HepG2 (cell line): ENCODE measurements at regions of chr17 and their contacts with region 1.

Region 1: GRCh38 chr17:65644545-65644944 is 83.1 kb upstream of the AXIN2 start:
- DNase-seq: no peak
- ATAC-seq: no peak
- H3K4me3 ChIP-seq: no peak overlapping the region
- H3K27ac ChIP-seq: no peak overlapping the region
- H3K4me1 ChIP-seq: no peaks in the 10 kb centered on the region
- H3K27me3 ChIP-seq: no peaks in the 10 kb centered on the region
- CTCF ChIP-seq: no peak
- EP300 ChIP-seq: no peak
- POLR2A ChIP-seq: no peak
- RAD21 ChIP-seq: no peak

Region 2: GRCh38 chr17:64005734-64006167 is 1638.8 kb before region 1 on chr17:
- CTCF ChIA-PET with region 1: no interaction called
- POLR2A ChIA-PET with region 1: no interaction called
- in situ Hi-C with region 1: no loop called
- intact Hi-C with region 1: loop called (anchors 5 kb)
- DNase-seq: peak; percentile 62
- ATAC-seq: peak; percentile 70
- H3K4me3 ChIP-seq: peak overlapping the region in 2 of 3 experiments; percentile 15 to 67; a peak in 3 of 6 replicates
- H3K27ac ChIP-seq: peak overlapping the region; percentile 8
- H3K4me1 ChIP-seq: peaks cover 74% of the 10 kb centered on the region
- H3K27me3 ChIP-seq: no peaks in the 10 kb centered on the region
- CTCF ChIP-seq: peak; percentile 39; the same call in 1 of the 2 replicates
- EP300 ChIP-seq: no peak
- POLR2A ChIP-seq: no peak
- RAD21 ChIP-seq: no peak

Region 3: DNA sequence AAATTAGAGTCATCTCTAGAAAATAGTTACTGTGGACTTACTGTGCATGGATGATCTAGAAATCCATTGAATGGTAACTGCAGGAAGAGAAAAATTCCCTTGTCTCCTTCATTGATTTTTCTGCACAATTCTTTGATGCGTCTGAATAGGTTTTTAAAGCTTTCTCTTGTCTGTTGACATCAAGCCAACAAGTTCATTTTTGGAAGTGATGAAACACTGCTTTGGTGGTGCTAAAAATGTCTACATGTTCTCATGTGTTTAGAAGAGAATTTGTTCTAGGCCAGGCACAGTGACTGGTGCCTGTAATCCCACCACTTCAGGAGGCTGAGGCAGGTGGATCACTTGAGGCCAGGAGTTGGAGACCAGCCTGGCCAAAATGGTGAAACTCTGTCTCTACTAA is 26.0 kb before region 1 on chr17:
- CTCF ChIA-PET with region 1: no interaction called
- POLR2A ChIA-PET with region 1: no interaction called
- in situ Hi-C with region 1: no loop called
- intact Hi-C with region 1: no loop called
- DNase-seq: no peak
- ATAC-seq: no peak
- H3K4me3 ChIP-seq: no peak overlapping the region
- H3K27ac ChIP-seq: no peak overlapping the region
- H3K4me1 ChIP-seq: 0 out of 2 replicates have a peak, but pooled peaks cover 8% of the 10 kb centered on the region
- H3K27me3 ChIP-seq: no peaks in the 10 kb centered on the region; a peak in 1 of 5 replicates
- CTCF ChIP-seq: no peak
- EP300 ChIP-seq: no peak
- POLR2A ChIP-seq: no peak
- RAD21 ChIP-seq: no peak